ENCODE measurements at regions of chr2 and their contacts with region 1.

Region 1: GRCh38 chr2:136137982-136138381 is 20.0 kb upstream of the CXCR4 start:
- DNase-seq: no peak

Region 2: GRCh38 chr2:136168720-136169119 is 30.7 kb after region 1 on chr2:
- intact Hi-C with region 1: no loop called
- DNase-seq: no peak

Region 3: DNA sequence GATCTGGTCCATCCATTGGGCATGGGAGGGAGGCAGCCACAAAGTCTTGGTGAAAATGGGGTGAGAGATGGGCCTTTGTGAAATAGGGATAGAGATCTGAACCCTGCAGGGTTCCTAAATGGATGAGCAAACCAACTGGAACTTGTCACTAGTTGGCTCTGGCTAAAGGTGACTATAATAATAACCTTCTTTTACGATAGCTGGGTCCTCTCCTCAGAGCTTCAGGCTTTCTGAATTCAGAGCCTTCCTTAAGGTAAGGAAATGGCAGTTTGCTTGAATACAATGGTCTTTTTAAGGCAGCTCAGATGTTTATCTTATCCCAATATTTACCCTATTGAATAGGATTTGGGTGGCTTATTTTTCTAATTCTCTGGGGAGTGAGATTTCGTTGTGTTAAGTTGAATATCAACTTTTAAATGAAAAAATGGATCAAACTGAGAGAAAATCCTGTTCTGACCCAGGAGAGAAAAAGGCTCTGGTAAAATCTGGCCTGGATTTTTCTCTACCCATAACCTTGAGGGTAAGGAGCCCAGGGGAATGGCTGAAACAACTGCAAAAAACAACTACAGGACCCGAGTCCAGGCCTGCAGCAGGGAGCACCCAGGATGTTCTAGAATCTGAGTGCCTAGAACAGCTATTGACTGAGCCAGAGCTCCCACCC is 41.1 kb after region 1 on chr2:
- intact Hi-C with region 1: loop called in 1 of 2 experiments (anchors 1 kb)
- DNase-seq: no peak